Naive thymus-derived CD4-positive, alpha-beta T cell (primary cell): ENCODE measurements at regions of chr2 and their contacts with region 1.

Region 1: DNA sequence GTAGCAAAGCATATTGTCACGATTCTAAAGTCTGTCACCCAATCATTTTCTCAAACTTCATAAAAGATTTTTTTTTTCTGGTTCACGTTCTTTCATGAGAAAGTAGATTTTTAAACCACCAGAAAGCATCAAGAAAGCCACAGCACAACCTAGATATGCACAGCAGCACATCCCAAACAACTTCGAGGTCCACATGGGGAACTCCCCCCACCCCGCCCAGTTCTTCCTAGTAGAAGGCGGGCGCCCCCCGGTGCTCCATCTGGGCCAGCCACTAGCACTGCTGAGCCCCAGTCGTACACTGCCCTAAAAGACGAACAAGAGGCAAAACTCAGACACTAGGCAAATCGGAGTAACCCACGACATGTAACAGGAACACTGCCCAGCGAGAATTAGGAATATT is 15.5 kb downstream of the HDLBP start:
- DNase-seq: peak in 8 of 9 donors; percentile 22 to 72 (median 57)
- ATAC-seq: peak; percentile 91
- H3K4me3 ChIP-seq: no peak overlapping the region
- H3K4me3 Mint-ChIP-seq: peak overlapping the region; percentile 6 to 91 (median 63)
- H3K27ac ChIP-seq: no peak overlapping the region
- H3K27ac Mint-ChIP-seq: peak overlapping the region; percentile 27 to 84 (median 71)
- H3K4me1 ChIP-seq: peaks cover 17 to 21% of the 10 kb centered on the region in 2 donors
- H3K4me1 Mint-ChIP-seq: peaks cover 38 to 77% (median 71%) of the 10 kb centered on the region in 7 donors
- H3K27me3 ChIP-seq: no peaks in the 10 kb centered on the region
- H3K27me3 Mint-ChIP-seq: no peaks in the 10 kb centered on the region

Region 2: GRCh38 chr2:240913810-240914644 is 386.0 kb before region 1 on chr2:
- CTCF ChIA-PET with region 1: no interaction called
- POLR2A ChIA-PET with region 1: no interaction called
- intact Hi-C with region 1: loop called in 1 of 2 experiments (anchors 10 kb)
- DNase-seq: peak; percentile 29 to 72 (median 56)
- ATAC-seq: peak; percentile 63
- H3K4me3 ChIP-seq: no peak overlapping the region
- H3K4me3 Mint-ChIP-seq: no peak overlapping the region
- H3K27ac ChIP-seq: no peak overlapping the region
- H3K27ac Mint-ChIP-seq: no peak overlapping the region
- H3K4me1 ChIP-seq: no peaks in the 10 kb centered on the region
- H3K4me1 Mint-ChIP-seq: peaks cover 0 to 2% (median 0%) of the 10 kb centered on the region in 7 donors
- H3K27me3 ChIP-seq: peaks cover 3 to 4% of the 10 kb centered on the region in 2 donors
- H3K27me3 Mint-ChIP-seq: peaks cover 11 to 26% (median 15%) of the 10 kb centered on the region in 5 donors

Region 3: GRCh38 chr2:241011751-241012510 is 288.1 kb before region 1 on chr2:
- CTCF ChIA-PET with region 1: no interaction called
- POLR2A ChIA-PET with region 1: no interaction called
- intact Hi-C with region 1: no loop called
- DNase-seq: peak in 1 of 9 donors; percentile 19
- ATAC-seq: peak; percentile 26
- H3K4me3 ChIP-seq: no peak overlapping the region
- H3K4me3 Mint-ChIP-seq: peak overlapping the region in 9 of 10 donors; percentile 6 to 73 (median 44)
- H3K27ac ChIP-seq: peak overlapping the region; percentile 54
- H3K27ac Mint-ChIP-seq: peak overlapping the region in 8 of 9 donors; percentile 25 to 92 (median 72)
- H3K4me1 ChIP-seq: peaks cover 3 to 36% of the 10 kb centered on the region in 2 donors
- H3K4me1 Mint-ChIP-seq: peaks cover 16 to 44% (median 34%) of the 10 kb centered on the region in 7 donors
- H3K27me3 ChIP-seq: no peaks in the 10 kb centered on the region
- H3K27me3 Mint-ChIP-seq: peaks cover 0 to 10% (median 0%) of the 10 kb centered on the region in 5 donors

Region 4: GRCh38 chr2:241081643-241082340 is 218.2 kb before region 1 on chr2:
- CTCF ChIA-PET with region 1: no interaction called
- POLR2A ChIA-PET with region 1: no interaction called
- intact Hi-C with region 1: loop called in 1 of 2 experiments (anchors 1 kb)
- DNase-seq: no peak
- ATAC-seq: no peak
- H3K4me3 ChIP-seq: no peak overlapping the region
- H3K4me3 Mint-ChIP-seq: no peak overlapping the region
- H3K27ac ChIP-seq: no peak overlapping the region
- H3K27ac Mint-ChIP-seq: peak overlapping the region in 7 of 9 donors; percentile 65 to 89 (median 80)
- H3K4me1 ChIP-seq: no peaks in the 10 kb centered on the region
- H3K4me1 Mint-ChIP-seq: peaks cover 0 to 36% (median 28%) of the 10 kb centered on the region in 7 donors
- H3K27me3 ChIP-seq: no peaks in the 10 kb centered on the region
- H3K27me3 Mint-ChIP-seq: no peaks in the 10 kb centered on the region

Region 5: GRCh38 chr2:241168366-241168765 is 131.6 kb before region 1 on chr2:
- CTCF ChIA-PET with region 1: no interaction called
- POLR2A ChIA-PET with region 1: no interaction called
- intact Hi-C with region 1: no loop called
- DNase-seq: no peak
- ATAC-seq: no peak
- H3K4me3 ChIP-seq: no peak overlapping the region
- H3K4me3 Mint-ChIP-seq: no peak overlapping the region
- H3K27ac ChIP-seq: no peak overlapping the region
- H3K27ac Mint-ChIP-seq: no peak overlapping the region
- H3K4me1 ChIP-seq: no peaks in the 10 kb centered on the region
- H3K4me1 Mint-ChIP-seq: peaks cover 0 to 3% (median under 1%) of the 10 kb centered on the region in 7 donors
- H3K27me3 ChIP-seq: no peaks in the 10 kb centered on the region
- H3K27me3 Mint-ChIP-seq: no peaks in the 10 kb centered on the region

Region 6: GRCh38 chr2:241257417-241258032 is 42.5 kb before region 1 on chr2:
- CTCF ChIA-PET with region 1: no interaction called
- POLR2A ChIA-PET with region 1: no interaction called
- intact Hi-C with region 1: loop called in 1 of 2 experiments (anchors 2 kb)
- DNase-seq: no peak
- ATAC-seq: no peak
- H3K4me3 ChIP-seq: no peak overlapping the region
- H3K4me3 Mint-ChIP-seq: peak overlapping the region in 1 of 10 donors; percentile 42
- H3K27ac ChIP-seq: no peak overlapping the region
- H3K27ac Mint-ChIP-seq: no peak overlapping the region
- H3K4me1 ChIP-seq: no peaks in the 10 kb centered on the region
- H3K4me1 Mint-ChIP-seq: peaks cover 0 to 7% (median 4%) of the 10 kb centered on the region in 7 donors
- H3K27me3 ChIP-seq: no peaks in the 10 kb centered on the region
- H3K27me3 Mint-ChIP-seq: no peaks in the 10 kb centered on the region

Region 7: DNA sequence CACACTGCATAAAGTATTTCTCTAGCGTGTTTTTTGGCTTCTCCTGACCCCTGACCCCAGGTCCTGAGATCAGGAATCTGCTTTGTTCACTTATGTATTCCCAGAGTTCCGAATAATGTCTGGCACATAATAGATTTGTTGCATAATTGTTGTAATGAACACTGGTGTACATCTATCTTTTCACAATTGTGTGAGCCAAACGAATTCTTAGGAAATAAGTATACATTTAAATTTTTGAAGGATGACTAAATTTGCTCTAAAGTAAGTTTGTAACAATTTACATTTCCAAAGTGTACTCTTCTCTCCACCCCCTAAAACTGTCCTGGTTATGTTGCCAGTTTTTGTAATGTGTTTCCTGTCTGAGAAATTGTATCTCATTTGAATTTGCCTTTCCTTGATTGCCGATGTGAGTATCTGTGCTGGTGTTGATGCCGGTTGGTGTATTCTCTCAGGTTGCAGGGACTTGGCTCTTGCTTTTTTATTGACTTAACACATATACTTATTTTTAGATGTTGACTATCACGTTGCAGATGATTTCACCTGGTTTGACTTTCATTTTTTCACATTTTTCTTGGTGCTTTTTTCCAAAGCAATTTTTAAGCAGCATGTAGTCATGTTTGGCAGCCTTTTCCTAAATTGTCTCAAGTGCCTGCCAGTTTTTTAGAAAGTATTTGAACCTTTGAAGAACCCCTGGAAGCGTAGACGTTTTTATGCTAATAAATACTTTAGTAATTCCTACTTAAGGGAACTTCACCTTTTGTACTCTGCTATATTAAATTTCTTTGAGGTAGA is 40.0 kb after region 1 on chr2:
- CTCF ChIA-PET with region 1: no interaction called
- POLR2A ChIA-PET with region 1: no interaction called
- intact Hi-C with region 1: no loop called
- DNase-seq: no peak
- ATAC-seq: no peak
- H3K4me3 ChIP-seq: no peak overlapping the region
- H3K4me3 Mint-ChIP-seq: peak overlapping the region in 3 of 10 donors; percentile 23 to 66 (median 66)
- H3K27ac ChIP-seq: no peak overlapping the region
- H3K27ac Mint-ChIP-seq: peak overlapping the region in 8 of 9 donors; percentile 17 to 87 (median 77)
- H3K4me1 ChIP-seq: peaks cover 0 to 11% of the 10 kb centered on the region in 2 donors
- H3K4me1 Mint-ChIP-seq: peaks cover 16 to 44% (median 39%) of the 10 kb centered on the region in 7 donors
- H3K27me3 ChIP-seq: no peaks in the 10 kb centered on the region
- H3K27me3 Mint-ChIP-seq: no peaks in the 10 kb centered on the region